A549 (cell line): ENCODE measurements at regions of chr2 and their contacts with region 1.

Region 1: DNA sequence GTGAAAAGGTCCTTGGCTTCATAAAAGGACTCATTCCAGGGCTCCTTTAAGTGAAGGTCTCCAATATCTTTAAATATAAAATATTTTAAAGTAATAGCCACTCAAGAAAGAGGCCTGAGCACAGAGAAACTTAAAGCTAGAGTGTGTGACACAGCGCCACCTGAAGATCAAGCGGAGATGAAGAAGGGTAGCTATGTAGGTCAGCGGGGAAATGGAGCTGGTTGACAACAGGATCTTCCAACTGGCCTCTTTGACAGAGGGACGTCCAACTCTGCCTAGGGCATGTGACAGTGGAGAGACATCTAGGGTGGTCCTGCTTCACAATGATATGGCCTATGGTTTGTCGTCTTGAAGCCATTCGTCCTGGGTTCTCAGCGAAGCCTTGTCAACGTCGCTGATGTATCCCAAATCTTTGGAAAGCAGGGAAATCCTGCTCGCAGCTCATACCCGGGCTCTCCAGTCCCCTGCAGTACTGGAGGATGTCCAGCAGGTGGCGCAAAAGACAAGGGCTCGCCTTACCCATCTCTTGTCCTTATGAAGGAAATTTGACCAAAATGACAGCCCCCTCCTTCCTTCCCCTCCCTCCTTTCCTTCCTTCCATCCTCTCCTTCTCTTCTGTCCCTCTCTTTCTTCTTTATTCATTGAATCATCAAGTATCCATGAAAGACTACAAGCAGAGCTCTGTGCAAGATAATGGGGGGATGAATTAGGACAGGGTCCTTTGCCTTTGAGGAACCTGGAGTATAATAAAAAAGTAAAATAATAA is 59.6 kb downstream of the LONRF2 start:
- DNase-seq: peak; percentile 60 to 77
- ATAC-seq: peak; percentile 52 to 82; a peak in 5 of 6 replicates
- H3K4me3 ChIP-seq: no peak overlapping the region
- H3K27ac ChIP-seq: peak overlapping the region in 1 of 2 experiments; percentile 62; a peak in 3 of 6 replicates
- H3K4me1 ChIP-seq: peaks cover 9% of the 10 kb centered on the region; the same call in 1 of the 3 replicates
- CTCF ChIP-seq: peak; percentile 91
- EP300 ChIP-seq: no peak
- POLR2A ChIP-seq: no peak
- RAD21 ChIP-seq: peak; percentile 95 to 97

Region 2: DNA sequence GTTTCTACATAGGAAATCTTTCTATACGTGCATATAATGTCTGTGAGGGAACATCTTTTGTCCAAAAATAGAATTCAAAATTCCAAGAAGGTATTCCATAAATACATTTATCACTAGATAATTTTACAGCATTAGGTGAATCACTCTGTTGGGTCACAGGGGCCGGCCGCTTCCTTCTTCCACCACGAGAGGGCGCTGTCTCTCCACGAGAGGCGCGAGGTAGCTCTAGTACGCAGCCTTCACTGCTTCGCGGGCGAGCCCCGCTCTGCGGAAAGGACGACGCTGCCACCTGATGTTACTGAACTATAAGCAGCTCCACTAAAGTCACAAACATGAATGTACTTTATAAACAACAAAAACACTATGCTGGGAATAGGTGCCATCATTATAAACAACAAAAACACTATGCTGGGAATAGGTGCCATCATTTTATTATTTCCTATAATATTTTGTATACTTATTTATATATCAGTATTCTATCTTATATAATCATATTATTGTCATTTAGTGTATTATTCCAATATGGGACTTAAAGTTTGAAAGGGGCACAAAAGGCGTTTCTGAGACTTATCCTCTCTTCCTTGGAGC is 703.6 kb before region 1 on chr2:
- CTCF ChIA-PET with region 1: interaction called, 74 read pairs
- POLR2A ChIA-PET with region 1: no interaction called
- DNase-seq: peak; percentile 67 to 71
- ATAC-seq: peak; percentile 91 to 98
- H3K4me3 ChIP-seq: no peak overlapping the region
- H3K27ac ChIP-seq: no peak overlapping the region
- H3K4me1 ChIP-seq: no peaks in the 10 kb centered on the region
- CTCF ChIP-seq: peak; percentile 94
- EP300 ChIP-seq: no peak
- POLR2A ChIP-seq: no peak
- RAD21 ChIP-seq: peak; percentile 94 to 96

Region 3: DNA sequence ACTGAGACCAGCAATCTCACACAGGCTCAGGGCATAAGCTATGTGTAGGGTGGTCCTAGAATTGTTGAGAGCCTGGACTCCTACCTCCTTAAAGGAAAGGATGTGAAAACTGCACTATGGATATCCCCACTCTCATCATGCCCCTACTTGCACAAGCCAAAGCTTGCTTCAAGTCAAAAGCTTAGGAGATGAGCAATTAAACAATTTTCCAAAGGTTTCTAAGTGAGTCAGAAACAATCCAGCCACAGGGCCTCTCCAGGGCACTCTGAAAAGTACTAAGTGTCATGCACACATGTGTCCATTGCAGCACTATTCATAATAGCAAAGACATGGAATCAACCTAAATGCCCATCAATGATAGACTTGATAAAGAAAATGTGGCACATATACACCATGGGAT is 335.8 kb before region 1 on chr2:
- CTCF ChIA-PET with region 1: no interaction called
- POLR2A ChIA-PET with region 1: no interaction called
- DNase-seq: no peak
- ATAC-seq: no peak
- H3K4me3 ChIP-seq: no peak overlapping the region
- H3K27ac ChIP-seq: no peak overlapping the region
- H3K4me1 ChIP-seq: no peaks in the 10 kb centered on the region
- CTCF ChIP-seq: no peak
- EP300 ChIP-seq: no peak
- POLR2A ChIP-seq: no peak
- RAD21 ChIP-seq: no peak

Region 4: GRCh38 chr2:100208141-100208770 is 54.5 kb before region 1 on chr2:
- CTCF ChIA-PET with region 1: no interaction called
- POLR2A ChIA-PET with region 1: no interaction called
- DNase-seq: no peak
- ATAC-seq: 0 out of 6 replicates have a peak, but pooled peaks of 1 of the 2 experiments have one; percentile 34
- H3K4me3 ChIP-seq: no peak overlapping the region
- H3K27ac ChIP-seq: no peak overlapping the region
- H3K4me1 ChIP-seq: no peaks in the 10 kb centered on the region
- CTCF ChIP-seq: no peak
- EP300 ChIP-seq: no peak
- POLR2A ChIP-seq: no peak
- RAD21 ChIP-seq: no peak

Region 5: GRCh38 chr2:100272841-100273329 is 10.1 kb after region 1 on chr2:
- CTCF ChIA-PET with region 1: interaction called, 109 read pairs
- POLR2A ChIA-PET with region 1: no interaction called
- DNase-seq: no peak
- ATAC-seq: no peak
- H3K4me3 ChIP-seq: no peak overlapping the region
- H3K27ac ChIP-seq: no peak overlapping the region
- H3K4me1 ChIP-seq: peaks cover 9% of the 10 kb centered on the region; the same call in 1 of the 3 replicates
- CTCF ChIP-seq: no peak
- EP300 ChIP-seq: no peak
- POLR2A ChIP-seq: no peak
- RAD21 ChIP-seq: no peak

Region 6: DNA sequence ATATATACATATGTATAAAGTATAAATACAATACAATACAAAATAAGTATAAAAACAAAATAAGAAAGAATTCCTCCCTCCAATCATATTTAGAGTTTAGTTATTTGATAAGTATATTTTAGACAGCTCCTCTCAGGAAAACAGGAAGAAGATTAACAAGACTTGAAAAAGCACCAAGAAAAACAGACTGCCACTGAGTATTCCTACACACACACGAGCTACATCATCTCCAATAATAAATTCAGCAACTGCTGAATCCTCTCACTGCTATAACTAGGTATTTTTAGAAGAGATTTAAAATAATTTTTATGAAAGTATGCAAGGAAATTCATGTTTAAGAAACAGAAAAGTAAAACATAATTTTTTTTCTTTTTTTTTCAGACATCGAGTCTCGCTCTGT is 46.6 kb after region 1 on chr2:
- CTCF ChIA-PET with region 1: interaction called, 13 read pairs
- POLR2A ChIA-PET with region 1: no interaction called
- DNase-seq: no peak
- ATAC-seq: no peak
- H3K4me3 ChIP-seq: no peak overlapping the region
- H3K27ac ChIP-seq: no peak overlapping the region
- H3K4me1 ChIP-seq: no peaks in the 10 kb centered on the region
- CTCF ChIP-seq: no peak
- EP300 ChIP-seq: no peak
- POLR2A ChIP-seq: no peak
- RAD21 ChIP-seq: no peak

Region 7: DNA sequence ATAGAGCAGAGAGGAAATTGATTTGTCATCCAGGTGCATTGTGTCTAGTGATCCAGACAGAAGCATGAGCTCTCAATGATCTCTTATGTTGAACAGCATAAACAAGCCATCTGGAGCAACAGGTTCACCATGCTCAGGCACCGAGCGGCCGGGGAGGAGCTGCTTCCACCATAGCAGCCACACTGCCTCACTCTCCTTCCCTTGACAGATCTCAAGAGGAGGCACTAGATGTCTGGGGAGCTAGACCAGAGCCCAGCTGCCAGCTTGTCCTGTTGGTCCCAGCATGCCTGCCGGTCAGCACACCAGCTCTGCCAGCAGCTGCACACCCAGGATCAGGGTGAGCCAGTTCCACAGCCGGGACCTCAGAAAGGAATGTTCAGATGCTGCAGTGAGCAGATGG is 77.1 kb after region 1 on chr2:
- CTCF ChIA-PET with region 1: interaction called, 19 read pairs
- POLR2A ChIA-PET with region 1: no interaction called
- DNase-seq: no peak
- ATAC-seq: no peak
- H3K4me3 ChIP-seq: no peak overlapping the region
- H3K27ac ChIP-seq: no peak overlapping the region
- H3K4me1 ChIP-seq: no peaks in the 10 kb centered on the region
- CTCF ChIP-seq: no peak
- EP300 ChIP-seq: no peak
- POLR2A ChIP-seq: no peak
- RAD21 ChIP-seq: no peak

Region 8: GRCh38 chr2:100391735-100392515 is 129.2 kb after region 1 on chr2:
- CTCF ChIA-PET with region 1: interaction called, 188 read pairs
- POLR2A ChIA-PET with region 1: no interaction called
- DNase-seq: no peak
- ATAC-seq: no peak
- H3K4me3 ChIP-seq: no peak overlapping the region
- H3K27ac ChIP-seq: no peak overlapping the region
- H3K4me1 ChIP-seq: no peaks in the 10 kb centered on the region
- CTCF ChIP-seq: no peak
- EP300 ChIP-seq: no peak
- POLR2A ChIP-seq: no peak
- RAD21 ChIP-seq: no peak